ENCODE measurements at regions of chr12 and their contacts with region 1.

Region 1: DNA sequence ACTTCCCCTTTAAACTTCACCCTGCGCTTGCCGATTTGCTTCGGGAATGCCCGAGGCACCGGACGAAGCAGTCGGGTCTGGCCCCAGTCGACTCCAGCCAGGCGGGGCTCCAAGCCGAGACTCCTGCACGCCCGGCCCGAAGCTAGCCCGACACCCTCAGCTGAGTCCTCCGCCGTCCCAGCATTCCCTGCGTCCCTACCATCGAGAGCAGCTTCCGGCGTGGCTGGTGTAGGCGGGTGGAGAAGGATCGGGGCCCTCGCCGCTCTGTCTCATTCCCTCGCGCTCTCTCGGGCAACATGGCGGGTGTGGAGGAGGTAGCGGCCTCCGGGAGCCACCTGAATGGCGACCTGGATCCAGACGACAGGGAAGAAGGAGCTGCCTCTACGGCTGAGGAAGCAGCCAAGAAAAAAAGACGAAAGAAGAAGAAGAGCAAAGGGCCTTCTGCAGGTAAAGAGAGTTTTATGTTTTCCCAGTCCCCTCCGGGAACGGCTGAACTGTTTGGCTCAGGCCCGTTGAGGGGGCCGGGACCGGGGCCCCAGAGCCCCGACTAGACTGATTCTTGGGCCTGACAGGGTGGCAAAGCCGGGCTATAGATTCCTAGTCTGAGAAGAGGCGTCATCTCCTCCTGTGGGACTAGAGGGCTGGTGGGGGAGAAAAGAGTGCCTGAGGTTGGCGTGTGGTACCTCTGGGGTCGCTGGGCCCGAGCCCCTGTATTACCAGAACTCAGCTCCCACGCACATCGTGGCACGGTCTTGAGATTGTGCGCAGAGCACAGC is at the start of gene METAP2:
- DNase-seq: peak; percentile 97
- H3K4me3 ChIP-seq: peak within 1 kb of the TSS; percentile 62 to 82 (median 78)
- H3K27ac ChIP-seq: peak within 1 kb of the TSS; percentile 87
- H3K4me1 ChIP-seq: peaks cover 18% of the 10 kb centered on the region
- H3K27me3 ChIP-seq: no peaks in the 10 kb centered on the region
- CTCF ChIP-seq: no peak
- POLR2A ChIP-seq: peak; percentile 85
- total RNA-seq, gene METAP2: 89.1 and 105 TPM in 2 replicates

Region 2: GRCh38 chr12:95102916-95103671 is 371.0 kb before region 1 on chr12:
- CTCF ChIA-PET with region 1: no interaction called
- POLR2A ChIA-PET with region 1: no interaction called
- dilution Hi-C with region 1: no loop called
- intact Hi-C with region 1: loop called (anchors 5 kb)
- DNase-seq: peak; percentile 82
- H3K4me3 ChIP-seq: no peak overlapping the region
- H3K27ac ChIP-seq: peak overlapping the region; percentile 59
- H3K4me1 ChIP-seq: peaks cover 15% of the 10 kb centered on the region
- H3K27me3 ChIP-seq: no peaks in the 10 kb centered on the region
- CTCF ChIP-seq: no peak
- POLR2A ChIP-seq: peak; percentile 36

Region 3: GRCh38 chr12:95358111-95359083 is 115.7 kb before region 1 on chr12:
- CTCF ChIA-PET with region 1: no interaction called
- POLR2A ChIA-PET with region 1: interaction called, 4 read pairs
- dilution Hi-C with region 1: no loop called
- intact Hi-C with region 1: loop called (anchors 2 kb)
- DNase-seq: peak; percentile 69
- H3K4me3 ChIP-seq: peak overlapping the region in 1 of 3 experiments; percentile 34
- H3K27ac ChIP-seq: peak overlapping the region; percentile 75
- H3K4me1 ChIP-seq: peaks cover 22% of the 10 kb centered on the region
- H3K27me3 ChIP-seq: no peaks in the 10 kb centered on the region
- CTCF ChIP-seq: no peak
- POLR2A ChIP-seq: no peak